ENCODE measurements at regions of chr10 and their contacts with region 1.

Region 1: GRCh38 chr10:122648599-122649428 is 50.8 kb downstream of the C10orf120 start:
- DNase-seq: peak; percentile 30 to 51
- ATAC-seq: peak; percentile 62 to 82
- H3K4me3 ChIP-seq: no peak overlapping the region
- H3K27ac ChIP-seq: no peak overlapping the region
- H3K4me1 ChIP-seq: no peaks in the 10 kb centered on the region
- CTCF ChIP-seq: peak; percentile 61
- EP300 ChIP-seq: no peak
- POLR2A ChIP-seq: no peak
- RAD21 ChIP-seq: peak; percentile 54 to 78

Region 2: GRCh38 chr10:122637376-122637775 is 11.4 kb before region 1 on chr10:
- CTCF ChIA-PET with region 1: interaction called, 19 read pairs
- POLR2A ChIA-PET with region 1: interaction called, 3 read pairs
- DNase-seq: no peak
- ATAC-seq: no peak
- H3K4me3 ChIP-seq: no peak overlapping the region
- H3K27ac ChIP-seq: no peak overlapping the region
- H3K4me1 ChIP-seq: no peaks in the 10 kb centered on the region
- CTCF ChIP-seq: no peak
- EP300 ChIP-seq: no peak
- POLR2A ChIP-seq: no peak
- RAD21 ChIP-seq: no peak

Region 3: DNA sequence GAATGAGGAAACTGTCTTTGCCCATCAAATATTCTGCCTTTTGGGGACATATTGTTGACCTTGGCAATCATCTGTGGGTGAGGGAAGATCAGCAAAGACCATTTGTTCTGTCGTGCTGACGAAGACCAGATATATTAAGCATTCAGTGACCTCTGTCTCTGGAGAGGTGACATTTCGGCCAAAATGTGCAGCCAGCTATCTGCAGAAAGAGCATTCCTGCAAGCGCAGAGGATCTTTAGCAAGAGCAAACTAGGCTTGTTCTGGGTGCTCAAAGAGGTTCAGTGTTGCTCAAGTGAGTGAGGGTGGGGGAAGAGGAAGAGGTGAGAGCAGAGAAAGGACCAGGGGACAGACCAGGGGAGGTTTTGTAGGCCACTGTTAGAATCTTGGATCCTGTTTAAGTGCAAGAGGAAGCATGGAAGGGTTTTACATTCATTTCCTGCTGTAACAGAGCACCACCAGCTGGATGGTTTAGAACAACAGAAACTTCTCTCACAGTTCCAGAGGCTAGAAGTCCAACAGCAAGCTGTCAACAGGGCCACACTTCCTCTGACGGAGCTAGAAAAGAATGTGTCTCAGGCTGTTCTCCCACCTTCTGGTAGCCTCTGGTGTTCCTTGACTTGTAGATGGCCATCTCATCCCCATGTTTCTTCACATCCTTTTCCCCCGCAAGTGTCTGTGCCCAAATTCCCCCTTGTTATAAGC is 39.6 kb after region 1 on chr10:
- CTCF ChIA-PET with region 1: interaction called, 11 read pairs
- POLR2A ChIA-PET with region 1: no interaction called
- DNase-seq: peak in 1 of 2 experiments; percentile 11
- ATAC-seq: peak; percentile 28 to 50; a peak in 2 of 6 replicates
- H3K4me3 ChIP-seq: no peak overlapping the region
- H3K27ac ChIP-seq: no peak overlapping the region
- H3K4me1 ChIP-seq: no peaks in the 10 kb centered on the region
- CTCF ChIP-seq: 0 out of 3 replicates have a peak, but pooled peaks have one; percentile 6
- EP300 ChIP-seq: no peak
- POLR2A ChIP-seq: no peak
- RAD21 ChIP-seq: peak in 1 of 2 experiments; percentile 23; a peak in 1 of 5 replicates

Region 4: DNA sequence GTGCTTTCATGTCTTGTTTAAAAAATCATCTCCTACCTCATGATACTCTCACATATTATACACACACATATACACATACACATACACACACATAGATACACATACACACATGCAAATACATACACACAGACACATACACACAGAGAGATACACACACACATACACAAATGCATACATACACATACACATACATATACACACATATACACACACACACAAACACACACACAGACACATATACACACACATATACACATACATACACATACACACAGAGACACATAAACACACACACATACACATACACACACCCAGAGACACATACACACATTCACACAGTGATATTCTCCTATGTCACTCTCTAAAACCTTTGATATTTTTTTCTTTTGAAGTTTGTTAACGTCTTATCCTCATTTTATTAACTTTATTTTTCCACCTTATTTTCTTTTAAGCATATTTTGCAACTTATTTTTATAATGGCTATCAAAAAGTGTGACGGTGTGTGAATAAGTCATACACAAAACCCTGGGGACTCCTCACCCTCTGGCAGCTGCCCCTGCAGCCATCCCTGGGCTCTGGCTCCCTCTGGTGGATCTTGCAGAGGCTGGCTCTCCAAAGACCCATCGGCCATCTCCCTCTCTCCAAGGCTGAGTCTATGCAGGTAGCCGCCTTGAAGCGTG is 54.8 kb after region 1 on chr10:
- CTCF ChIA-PET with region 1: interaction called, 25 read pairs
- POLR2A ChIA-PET with region 1: no interaction called
- DNase-seq: peak; percentile 62 to 84
- ATAC-seq: peak; percentile 99 to 100
- H3K4me3 ChIP-seq: no peak overlapping the region
- H3K27ac ChIP-seq: no peak overlapping the region
- H3K4me1 ChIP-seq: no peaks in the 10 kb centered on the region
- CTCF ChIP-seq: peak; percentile 85
- EP300 ChIP-seq: no peak
- POLR2A ChIP-seq: no peak
- RAD21 ChIP-seq: peak; percentile 94 to 97

Region 5: DNA sequence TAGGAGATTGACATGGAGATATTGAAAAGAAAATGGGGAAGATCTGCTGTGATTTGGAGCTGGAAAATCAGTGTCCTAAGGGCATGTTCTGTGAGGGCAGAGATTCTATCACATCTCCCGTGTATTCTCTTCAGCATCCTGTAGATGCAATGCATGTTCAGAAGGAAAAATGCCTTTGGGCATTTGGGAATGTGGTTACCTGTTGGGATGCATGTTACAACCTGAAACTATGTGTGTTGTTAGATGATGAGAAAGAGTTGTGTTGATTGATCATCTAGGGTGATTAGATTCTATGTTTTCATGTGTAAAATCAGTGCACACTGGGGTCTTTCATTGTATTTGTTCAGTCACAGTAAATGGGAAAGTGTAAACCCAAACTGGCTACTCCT is 182.1 kb after region 1 on chr10:
- CTCF ChIA-PET with region 1: no interaction called
- POLR2A ChIA-PET with region 1: no interaction called
- DNase-seq: no peak
- ATAC-seq: no peak
- H3K4me3 ChIP-seq: no peak overlapping the region
- H3K27ac ChIP-seq: no peak overlapping the region
- H3K4me1 ChIP-seq: no peaks in the 10 kb centered on the region
- CTCF ChIP-seq: no peak
- EP300 ChIP-seq: no peak
- POLR2A ChIP-seq: no peak
- RAD21 ChIP-seq: no peak

Region 6: GRCh38 chr10:123103944-123104343 is 455.1 kb after region 1 on chr10:
- CTCF ChIA-PET with region 1: no interaction called
- POLR2A ChIA-PET with region 1: no interaction called
- DNase-seq: no peak
- ATAC-seq: no peak
- H3K4me3 ChIP-seq: no peak overlapping the region
- H3K27ac ChIP-seq: no peak overlapping the region
- H3K4me1 ChIP-seq: peaks cover 2% of the 10 kb centered on the region; the same call in 2 of the 3 replicates
- CTCF ChIP-seq: no peak
- EP300 ChIP-seq: no peak
- POLR2A ChIP-seq: no peak
- RAD21 ChIP-seq: no peak

Measured in A549 (cell line).